Natural killer cell (primary cell): ENCODE measurements at regions of chr2 and their contacts with region 1.

Region 1: GRCh38 chr2:200888704-200889625 is at the starts of genes NIF3L1 and PPIL3:
- DNase-seq: peak; percentile 95 to 99
- ATAC-seq: peak; percentile 76 to 91 (median 84)
- H3K4me3 ChIP-seq: peak within 1 kb of the TSS; percentile 72
- H3K4me3 Mint-ChIP-seq: peak within 1 kb of the TSS; percentile 99
- H3K27ac ChIP-seq: peak within 1 kb of the TSS; percentile 91
- H3K27ac Mint-ChIP-seq: peak within 1 kb of the TSS; percentile 99 to 100
- H3K4me1 ChIP-seq: peaks cover 28% of the 10 kb centered on the region
- H3K4me1 Mint-ChIP-seq: peaks cover 39 to 49% of the 10 kb centered on the region in 2 donors
- H3K27me3 ChIP-seq: no peaks in the 10 kb centered on the region
- H3K27me3 Mint-ChIP-seq: no peaks in the 10 kb centered on the region
- CTCF ChIP-seq: no peak
- total RNA-seq, gene NIF3L1: 8.8 to 13.3 (median 9.6) TPM
- total RNA-seq, gene PPIL3: 30.0 to 39.9 (median 33.3) TPM

Region 2: DNA sequence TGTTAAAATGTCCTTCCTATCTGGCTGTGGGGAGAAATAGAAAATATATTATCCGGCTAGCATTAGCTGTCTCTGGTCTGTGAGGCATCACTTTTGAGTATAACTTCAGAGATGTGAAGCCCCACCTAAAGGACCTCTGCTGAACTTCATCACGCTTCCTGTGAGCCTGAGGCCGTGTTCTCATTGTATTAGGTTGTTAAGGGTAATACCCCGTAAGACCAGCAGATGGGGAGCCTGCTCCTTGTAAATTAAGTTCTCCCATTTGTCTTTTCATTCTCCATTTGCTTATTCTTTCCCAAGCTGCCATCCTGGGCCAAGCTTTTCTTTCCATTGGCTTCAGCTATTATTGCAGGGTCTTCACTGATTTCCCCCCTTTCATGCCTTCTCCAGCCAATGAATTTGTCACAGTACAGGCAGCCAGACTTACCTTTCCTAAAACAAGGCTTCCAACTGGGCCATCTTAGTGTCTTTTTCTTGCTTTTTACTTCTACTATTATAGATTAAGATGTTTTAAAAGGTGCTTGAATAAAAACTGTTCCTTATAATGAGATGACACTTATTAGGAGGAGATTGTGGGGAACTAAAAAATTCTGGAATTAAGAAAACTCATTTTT is 12.6 kb after region 1 on chr2:
- intact Hi-C with region 1: no loop called
- DNase-seq: peak; percentile 55 to 91
- ATAC-seq: peak; percentile 100
- H3K4me3 ChIP-seq: no peak overlapping the region
- H3K4me3 Mint-ChIP-seq: no peak overlapping the region
- H3K27ac ChIP-seq: peak overlapping the region; percentile 34
- H3K27ac Mint-ChIP-seq: peak overlapping the region; percentile 63
- H3K4me1 ChIP-seq: no peaks in the 10 kb centered on the region
- H3K4me1 Mint-ChIP-seq: peaks cover 6 to 8% of the 10 kb centered on the region in 2 donors
- H3K27me3 ChIP-seq: no peaks in the 10 kb centered on the region
- H3K27me3 Mint-ChIP-seq: no peaks in the 10 kb centered on the region
- CTCF ChIP-seq: peak; percentile 87

Region 3: GRCh38 chr2:200963124-200963917 is 74.4 kb after region 1 on chr2 and contains the start of gene ORC2:
- intact Hi-C with region 1: loop called (anchors 1 kb)
- DNase-seq: peak; percentile 94 to 96
- ATAC-seq: peak; percentile 95 to 99 (median 96)
- H3K4me3 ChIP-seq: peak within 1 kb of the TSS; percentile 75
- H3K4me3 Mint-ChIP-seq: peak within 1 kb of the TSS; percentile 98
- H3K27ac ChIP-seq: peak within 1 kb of the TSS; percentile 86
- H3K27ac Mint-ChIP-seq: peak within 1 kb of the TSS; percentile 98
- H3K4me1 ChIP-seq: peaks cover 8% of the 10 kb centered on the region
- H3K4me1 Mint-ChIP-seq: peaks cover 34 to 47% of the 10 kb centered on the region in 2 donors
- H3K27me3 ChIP-seq: no peaks in the 10 kb centered on the region
- H3K27me3 Mint-ChIP-seq: no peaks in the 10 kb centered on the region
- CTCF ChIP-seq: peak; percentile 71
- total RNA-seq, gene ORC2: 21.7 to 48.5 (median 26.1) TPM

Region 4: GRCh38 chr2:201118121-201118960 is 229.4 kb after region 1 on chr2:
- intact Hi-C with region 1: loop called (anchors 2 kb)
- DNase-seq: peak; percentile 87 to 93
- ATAC-seq: peak; percentile 46 to 61 (median 54)
- H3K4me3 ChIP-seq: peak overlapping the region; percentile 90
- H3K4me3 Mint-ChIP-seq: peak overlapping the region; percentile 95
- H3K27ac ChIP-seq: peak overlapping the region; percentile 93
- H3K27ac Mint-ChIP-seq: peak overlapping the region; percentile 93 to 100
- H3K4me1 ChIP-seq: peaks cover 50% of the 10 kb centered on the region
- H3K4me1 Mint-ChIP-seq: peaks cover 79 to 82% of the 10 kb centered on the region in 2 donors
- H3K27me3 ChIP-seq: no peaks in the 10 kb centered on the region
- H3K27me3 Mint-ChIP-seq: no peaks in the 10 kb centered on the region
- CTCF ChIP-seq: peak; percentile 40

Region 5: DNA sequence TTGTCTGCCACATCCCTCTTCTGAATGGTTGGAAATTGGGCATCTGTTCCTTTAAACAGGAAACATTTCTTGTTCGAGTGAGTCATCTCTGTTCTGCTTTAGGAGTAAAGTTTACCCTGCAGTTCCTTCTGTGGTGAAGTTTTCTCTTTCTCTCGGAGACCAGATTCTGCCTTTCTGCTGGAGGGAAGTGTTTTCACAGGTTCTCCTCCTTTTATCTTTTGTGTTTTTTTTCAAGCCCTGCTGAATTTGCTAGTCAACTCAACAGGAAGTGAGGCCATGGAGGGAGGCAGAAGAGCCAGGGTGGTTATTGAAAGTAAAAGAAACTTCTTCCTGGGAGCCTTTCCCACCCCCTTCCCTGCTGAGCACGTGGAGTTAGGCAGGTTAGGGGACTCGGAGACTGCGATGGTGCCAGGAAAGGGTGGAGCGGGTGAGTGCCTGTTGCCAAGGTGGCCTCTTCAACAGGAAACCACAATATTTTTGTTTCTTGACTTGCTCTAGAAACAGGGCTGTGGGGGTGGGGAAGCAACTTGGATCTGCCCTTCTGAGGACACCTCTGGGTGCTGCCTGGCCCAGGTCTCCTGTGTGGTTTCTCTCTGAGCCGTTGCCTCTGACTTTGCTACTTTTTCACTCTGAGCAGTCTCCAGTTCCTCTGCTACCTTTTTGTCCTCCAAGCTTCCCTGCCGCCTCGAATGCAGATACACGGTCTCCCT is 369.1 kb after region 1 on chr2:
- intact Hi-C with region 1: loop called (anchors 5 kb)
- DNase-seq: peak; percentile 75 to 97
- ATAC-seq: peak; percentile 53 to 83 (median 73)
- H3K4me3 ChIP-seq: peak overlapping the region; percentile 42
- H3K4me3 Mint-ChIP-seq: peak overlapping the region; percentile 94
- H3K27ac ChIP-seq: peak overlapping the region; percentile 98
- H3K27ac Mint-ChIP-seq: peak overlapping the region; percentile 100
- H3K4me1 ChIP-seq: peaks cover 71% of the 10 kb centered on the region
- H3K4me1 Mint-ChIP-seq: peaks cover 66 to 77% of the 10 kb centered on the region in 2 donors
- H3K27me3 ChIP-seq: no peaks in the 10 kb centered on the region
- H3K27me3 Mint-ChIP-seq: no peaks in the 10 kb centered on the region
- CTCF ChIP-seq: no peak